Naive thymus-derived CD4-positive, alpha-beta T cell (primary cell): ENCODE measurements at regions of chr12 and their contacts with region 1.

Region 1: DNA sequence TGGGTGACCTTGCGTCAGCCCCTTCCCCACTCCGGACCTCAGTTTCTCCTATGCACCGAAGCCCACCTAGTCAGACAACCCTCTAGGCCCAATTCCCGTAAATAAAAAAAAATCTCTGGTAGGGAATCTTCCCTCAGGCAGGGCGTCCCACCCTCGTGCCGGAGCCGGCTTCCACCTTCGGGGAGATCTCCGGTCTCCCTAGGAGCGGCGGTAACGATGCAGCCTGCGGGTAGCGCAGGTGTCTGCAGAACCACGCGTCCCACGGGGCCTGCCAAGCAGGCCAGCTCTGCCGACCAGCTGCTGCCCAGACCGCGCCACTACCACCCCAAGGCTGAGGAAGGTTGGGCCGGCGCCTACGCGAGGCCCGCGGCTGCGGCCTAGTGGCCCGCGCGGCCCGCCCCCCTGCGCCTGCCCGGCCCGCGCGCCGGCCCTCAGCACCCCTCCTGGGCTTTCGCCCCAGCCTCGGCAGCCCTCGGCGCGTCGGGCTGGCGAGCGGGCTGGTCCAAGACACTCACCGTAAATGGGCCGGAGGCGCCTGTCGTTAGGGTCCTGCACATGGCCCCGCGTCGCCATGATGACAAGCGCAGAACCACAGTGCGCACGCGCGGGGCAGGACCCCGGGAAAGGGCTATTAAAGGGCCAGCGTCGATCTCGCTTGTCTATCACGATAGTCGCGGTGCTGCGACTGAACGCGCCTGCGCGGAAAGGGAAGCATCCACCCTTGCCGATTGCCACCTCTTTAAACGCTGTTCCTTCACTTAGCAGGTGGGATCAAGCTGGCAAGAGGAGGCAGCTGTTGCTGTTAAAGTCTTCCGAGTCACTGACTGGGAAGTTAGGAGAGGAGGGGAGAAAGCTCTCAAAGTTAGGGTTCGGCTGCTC is at the start of gene NAA25:
- DNase-seq: peak; percentile 79 to 90 (median 86)
- ATAC-seq: peak; percentile 92
- H3K4me3 ChIP-seq: peak within 1 kb of the TSS; percentile 100
- H3K4me3 Mint-ChIP-seq: peak within 1 kb of the TSS; percentile 96 to 99 (median 98)
- H3K27ac ChIP-seq: peak within 1 kb of the TSS; percentile 92
- H3K27ac Mint-ChIP-seq: peak within 1 kb of the TSS; percentile 93 to 98 (median 97)
- H3K4me1 ChIP-seq: peaks cover 12 to 22% of the 10 kb centered on the region in 2 donors
- H3K4me1 Mint-ChIP-seq: peaks cover 27 to 53% (median 45%) of the 10 kb centered on the region in 7 donors
- H3K27me3 ChIP-seq: no peaks in the 10 kb centered on the region
- H3K27me3 Mint-ChIP-seq: no peaks in the 10 kb centered on the region
- total RNA-seq, gene NAA25: 39.1 to 43.0 (median 42.1) TPM

Region 2: GRCh38 chr12:111868676-111869588 is 239.5 kb before region 1 on chr12:
- CTCF ChIA-PET with region 1: no interaction called
- POLR2A ChIA-PET with region 1: no interaction called
- intact Hi-C with region 1: no loop called
- DNase-seq: no peak
- ATAC-seq: no peak
- H3K4me3 ChIP-seq: no peak overlapping the region
- H3K4me3 Mint-ChIP-seq: no peak overlapping the region
- H3K27ac ChIP-seq: no peak overlapping the region
- H3K27ac Mint-ChIP-seq: peak overlapping the region in 5 of 9 donors; percentile 18 to 53 (median 45)
- H3K4me1 ChIP-seq: no peaks in the 10 kb centered on the region
- H3K4me1 Mint-ChIP-seq: peaks cover 0 to 2% (median 0%) of the 10 kb centered on the region in 7 donors
- H3K27me3 ChIP-seq: no peaks in the 10 kb centered on the region
- H3K27me3 Mint-ChIP-seq: no peaks in the 10 kb centered on the region

Region 3: GRCh38 chr12:112087851-112088250 is 20.6 kb before region 1 on chr12:
- CTCF ChIA-PET with region 1: no interaction called
- POLR2A ChIA-PET with region 1: no interaction called
- intact Hi-C with region 1: no loop called
- DNase-seq: no peak
- ATAC-seq: no peak
- H3K4me3 ChIP-seq: no peak overlapping the region
- H3K4me3 Mint-ChIP-seq: no peak overlapping the region
- H3K27ac ChIP-seq: no peak overlapping the region
- H3K27ac Mint-ChIP-seq: peak overlapping the region in 6 of 9 donors; percentile 7 to 30 (median 18)
- H3K4me1 ChIP-seq: no peaks in the 10 kb centered on the region
- H3K4me1 Mint-ChIP-seq: peaks cover 9 to 24% (median 16%) of the 10 kb centered on the region in 7 donors
- H3K27me3 ChIP-seq: no peaks in the 10 kb centered on the region
- H3K27me3 Mint-ChIP-seq: no peaks in the 10 kb centered on the region

Region 4: DNA sequence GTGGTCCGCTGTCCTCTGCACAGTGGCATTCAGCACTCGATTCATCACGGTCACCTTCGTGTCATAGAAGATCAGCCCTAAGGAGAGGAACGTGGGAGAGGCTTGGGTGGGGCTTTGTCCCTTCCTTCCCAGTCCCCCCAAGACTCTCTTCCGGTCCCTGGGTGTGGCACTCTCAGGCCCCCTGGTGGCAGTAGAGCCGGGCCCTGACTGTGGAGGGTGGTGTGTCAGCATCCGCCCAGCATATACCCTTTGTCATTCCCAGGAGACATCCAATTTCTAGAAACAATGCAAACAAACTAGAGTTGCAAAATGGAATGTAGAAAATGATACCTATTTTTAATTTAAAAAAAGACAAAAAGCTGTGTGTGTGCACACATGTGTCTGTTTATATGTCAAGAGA is 61.9 kb after region 1 on chr12:
- CTCF ChIA-PET with region 1: interaction called, 3 read pairs
- POLR2A ChIA-PET with region 1: interaction called, 3 read pairs
- intact Hi-C with region 1: loop called in 1 of 2 experiments (anchors 1 kb)
- DNase-seq: peak in 1 of 9 donors; percentile 9
- ATAC-seq: peak; percentile 45
- H3K4me3 ChIP-seq: no peak overlapping the region
- H3K4me3 Mint-ChIP-seq: no peak overlapping the region
- H3K27ac ChIP-seq: no peak overlapping the region
- H3K27ac Mint-ChIP-seq: peak overlapping the region in 4 of 9 donors; percentile 39 to 70 (median 44)
- H3K4me1 ChIP-seq: no peaks in the 10 kb centered on the region
- H3K4me1 Mint-ChIP-seq: peaks cover 0 to 2% (median 0%) of the 10 kb centered on the region in 7 donors
- H3K27me3 ChIP-seq: no peaks in the 10 kb centered on the region
- H3K27me3 Mint-ChIP-seq: no peaks in the 10 kb centered on the region